Thyroid gland (tissue), 4 donors: ENCODE measurements at regions of chr14 and their contacts with region 1.

Region 1: GRCh38 chr14:100645192-100645990 is 58.2 kb upstream of the BEGAIN start:
- DNase-seq: peak; percentile 82 to 85
- H3K4me3 ChIP-seq: no peak overlapping the region
- H3K27ac ChIP-seq: no peak overlapping the region
- H3K4me1 ChIP-seq: peaks cover 0 to 3% of the 10 kb centered on the region in 2 donors
- H3K27me3 ChIP-seq: no peaks in the 10 kb centered on the region
- CTCF ChIP-seq: peak; percentile 21 to 71 (median 58)
- POLR2A ChIP-seq: no peak

Region 2: GRCh38 chr14:100384819-100385813 is 260.3 kb before region 1 on chr14:
- intact Hi-C with region 1: loop called (anchors 5 kb)
- DNase-seq: no peak
- H3K4me3 ChIP-seq: no peak overlapping the region
- H3K27ac ChIP-seq: no peak overlapping the region
- H3K4me1 ChIP-seq: peaks cover 8 to 38% of the 10 kb centered on the region in 2 donors
- H3K27me3 ChIP-seq: no peaks in the 10 kb centered on the region
- CTCF ChIP-seq: peak in 4 of 6 experiments; percentile 17 to 47 (median 38)
- POLR2A ChIP-seq: no peak

Region 3: GRCh38 chr14:100438678-100439592 is 206.5 kb before region 1 on chr14:
- intact Hi-C with region 1: loop called (anchors 10 kb)
- DNase-seq: peak; percentile 15 to 54
- H3K4me3 ChIP-seq: no peak overlapping the region
- H3K27ac ChIP-seq: no peak overlapping the region
- H3K4me1 ChIP-seq: peaks cover 14 to 22% of the 10 kb centered on the region in 2 donors
- H3K27me3 ChIP-seq: no peaks in the 10 kb centered on the region
- CTCF ChIP-seq: no peak
- POLR2A ChIP-seq: no peak